Activated B cell treated with CpG ODN at 0.5 μM for 24 hours (primary cell): ENCODE measurements at regions of chr9 and their contacts with region 1.

Region 1: DNA sequence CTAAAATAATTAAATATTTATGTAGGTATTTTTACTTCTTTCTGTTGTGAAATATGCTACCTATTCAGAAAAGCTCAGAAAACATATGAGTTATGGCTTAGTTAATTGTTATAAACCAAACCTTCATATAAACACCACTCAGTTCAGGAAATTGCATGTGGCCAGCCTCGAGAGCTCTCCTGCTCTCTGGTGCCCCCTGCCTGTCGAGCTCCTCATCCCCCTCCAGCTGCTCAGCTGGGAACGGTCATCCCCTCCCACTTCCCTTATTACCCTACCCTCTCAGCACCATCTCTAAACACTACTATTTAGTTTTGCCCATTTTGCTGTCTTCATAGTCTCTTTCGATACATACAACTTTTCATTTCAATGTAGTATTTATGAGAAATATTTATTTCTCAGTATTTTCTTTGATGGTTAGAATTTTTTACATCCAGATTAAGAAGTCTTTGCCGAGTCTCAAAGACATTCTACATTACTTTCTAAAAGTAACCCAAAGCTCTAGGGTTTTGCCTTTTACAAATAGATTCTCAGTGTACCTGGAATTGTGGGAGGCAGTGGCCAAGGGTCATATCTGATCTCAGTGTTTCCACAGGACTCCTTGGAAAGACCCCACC is 51.2 kb upstream of the SEMA4D start:
- DNase-seq: peak; percentile 74
- ATAC-seq: peak; percentile 100
- H3K4me3 Mint-ChIP-seq: no peak overlapping the region
- H3K27ac Mint-ChIP-seq: peak overlapping the region; percentile 41
- H3K4me1 Mint-ChIP-seq: peaks cover 6% of the 10 kb centered on the region
- H3K27me3 Mint-ChIP-seq: no peaks in the 10 kb centered on the region
- CTCF ChIP-seq: peak; percentile 94

Region 2: DNA sequence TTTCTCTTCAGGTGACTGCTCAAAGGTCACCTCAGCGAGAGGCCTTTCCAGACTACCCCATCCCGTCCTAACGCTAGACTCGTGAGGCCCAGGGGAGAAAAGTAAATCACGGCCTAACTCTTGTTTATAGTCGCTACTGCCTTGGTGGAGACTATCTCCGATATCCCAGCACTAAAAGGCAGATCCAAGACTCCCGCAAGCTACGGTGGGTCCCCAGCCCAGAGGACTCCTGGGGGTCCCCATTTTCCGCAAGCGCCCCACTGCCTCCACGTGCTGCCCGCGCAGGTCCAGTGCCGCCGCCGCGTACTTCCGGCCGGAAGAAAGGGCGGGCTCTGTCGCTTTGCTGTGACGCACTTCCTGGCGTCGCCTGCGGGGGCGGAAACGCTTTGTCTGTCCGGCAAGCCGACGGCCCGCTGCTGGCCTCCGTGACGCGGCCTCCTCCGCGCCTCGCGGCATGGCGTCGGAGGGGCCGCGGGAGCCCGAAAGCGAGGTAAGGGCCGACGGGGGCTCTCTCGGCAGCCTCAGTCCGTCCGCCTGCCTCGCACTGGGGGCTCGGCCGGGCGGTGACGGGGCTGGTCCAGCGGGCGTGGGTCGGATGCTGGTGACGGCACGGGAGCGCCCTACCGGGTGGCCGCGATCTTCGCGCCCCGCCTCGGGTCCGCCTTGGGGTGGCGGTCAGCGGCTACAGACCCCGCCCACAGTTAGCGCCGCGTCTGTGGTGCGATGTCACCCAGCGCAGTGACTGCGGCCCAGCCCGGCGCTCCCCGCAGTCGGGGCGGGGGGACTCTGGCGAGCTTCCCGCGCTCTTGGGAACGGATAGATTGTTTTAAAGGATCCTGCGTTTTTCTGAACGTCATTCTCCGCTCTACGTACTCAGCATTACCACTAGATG is 230.8 kb before region 1 on chr9 and contains the start of gene SECISBP2:
- CTCF ChIA-PET with region 1: interaction called, 5 read pairs
- POLR2A ChIA-PET with region 1: interaction called, 19 read pairs
- intact Hi-C with region 1: loop called (anchors 1 kb)
- DNase-seq: peak; percentile 98
- ATAC-seq: peak; percentile 92
- H3K4me3 Mint-ChIP-seq: peak within 1 kb of the TSS; percentile 91
- H3K27ac Mint-ChIP-seq: peak within 1 kb of the TSS; percentile 98
- H3K4me1 Mint-ChIP-seq: peaks cover 62% of the 10 kb centered on the region
- H3K27me3 Mint-ChIP-seq: no peaks in the 10 kb centered on the region
- CTCF ChIP-seq: no peak
- total RNA-seq, gene SECISBP2: 81.5 and 97.1 TPM in 2 replicates

Region 3: DNA sequence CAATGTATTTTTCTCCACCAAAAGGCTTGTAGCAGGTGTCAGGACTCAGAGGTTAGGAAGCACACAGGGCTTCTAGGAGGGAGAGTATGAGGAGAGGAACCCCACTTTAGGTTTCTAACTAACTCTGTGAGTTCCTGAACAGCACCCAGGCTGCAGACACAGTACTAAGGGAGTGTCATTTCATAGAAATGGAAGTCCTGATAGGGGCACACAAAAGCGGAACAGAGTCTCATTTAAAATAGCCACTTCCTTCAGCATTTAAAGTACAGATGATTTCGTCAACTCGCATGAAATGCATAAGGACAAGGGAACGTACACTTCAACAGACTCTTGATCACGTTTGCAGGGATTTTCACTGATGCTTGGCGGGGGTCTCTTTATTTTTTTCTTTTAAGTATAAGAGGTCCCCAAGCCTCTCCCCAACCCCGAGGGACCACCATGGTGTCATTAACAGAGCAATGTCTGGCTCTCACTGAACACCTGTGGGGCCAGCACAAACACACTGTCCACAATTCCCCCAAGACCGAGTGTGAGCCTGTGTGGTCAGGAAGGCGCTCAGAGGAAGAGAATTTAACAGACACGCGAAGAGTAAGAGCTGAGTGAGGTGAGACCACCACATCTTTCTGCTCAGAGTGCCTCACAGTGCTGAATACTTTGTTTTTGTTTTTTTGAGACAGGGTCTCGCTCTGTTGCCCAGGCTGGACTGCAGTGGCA is 148.6 kb before region 1 on chr9:
- CTCF ChIA-PET with region 1: interaction called, 14 read pairs
- POLR2A ChIA-PET with region 1: interaction called, 6 read pairs
- intact Hi-C with region 1: loop called (anchors 1 kb)
- DNase-seq: peak; percentile 35
- ATAC-seq: peak; percentile 83
- H3K4me3 Mint-ChIP-seq: peak overlapping the region; percentile 68
- H3K27ac Mint-ChIP-seq: peak overlapping the region; percentile 90
- H3K4me1 Mint-ChIP-seq: peaks cover 62% of the 10 kb centered on the region
- H3K27me3 Mint-ChIP-seq: no peaks in the 10 kb centered on the region
- CTCF ChIP-seq: no peak

Region 4: DNA sequence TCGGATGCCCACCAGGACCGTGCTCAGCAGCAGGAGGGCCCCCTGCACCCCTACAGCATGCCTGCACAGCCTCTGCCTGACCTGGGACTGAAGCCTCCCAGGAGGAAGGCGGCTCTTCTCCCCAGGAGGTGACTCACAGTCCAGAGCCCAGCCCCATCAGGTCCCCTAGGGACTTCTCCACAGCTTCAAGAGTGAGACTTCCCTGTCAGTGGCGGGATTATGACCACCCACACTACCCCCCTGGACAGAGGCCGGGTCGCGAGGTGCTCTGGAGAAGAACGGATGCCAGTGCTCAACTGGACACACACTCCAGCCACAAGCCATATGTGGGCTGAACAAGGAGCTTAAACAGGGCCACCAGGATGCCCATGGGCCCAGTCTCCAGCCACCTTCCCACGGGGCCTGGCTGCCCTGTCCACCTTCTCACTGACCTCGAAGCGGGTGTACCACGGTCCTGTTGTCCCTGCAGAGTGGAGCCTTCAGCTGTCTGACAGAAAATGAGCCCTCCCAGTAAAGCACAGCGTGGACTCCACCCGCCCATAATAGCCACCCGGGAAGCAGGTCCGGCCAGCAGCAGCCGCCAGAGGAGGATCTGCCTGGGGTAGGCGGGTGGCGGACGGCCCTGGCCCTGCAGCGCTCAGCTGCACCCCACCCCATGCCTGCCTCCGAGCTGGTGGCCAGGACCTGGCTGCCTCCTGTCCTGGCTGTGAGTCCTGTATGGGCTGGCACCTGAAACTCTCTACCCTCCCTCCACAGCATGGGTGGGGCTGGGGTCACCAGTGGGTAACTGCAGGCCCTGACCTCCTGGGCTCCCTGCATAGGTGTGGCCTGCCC is 105.9 kb before region 1 on chr9:
- CTCF ChIA-PET with region 1: interaction called, 17 read pairs
- POLR2A ChIA-PET with region 1: interaction called, 4 read pairs
- intact Hi-C with region 1: no loop called
- DNase-seq: no peak
- ATAC-seq: peak; percentile 79
- H3K4me3 Mint-ChIP-seq: peak overlapping the region; percentile 67
- H3K27ac Mint-ChIP-seq: peak overlapping the region; percentile 65
- H3K4me1 Mint-ChIP-seq: peaks cover 79% of the 10 kb centered on the region
- H3K27me3 Mint-ChIP-seq: no peaks in the 10 kb centered on the region
- CTCF ChIP-seq: no peak

Region 5: DNA sequence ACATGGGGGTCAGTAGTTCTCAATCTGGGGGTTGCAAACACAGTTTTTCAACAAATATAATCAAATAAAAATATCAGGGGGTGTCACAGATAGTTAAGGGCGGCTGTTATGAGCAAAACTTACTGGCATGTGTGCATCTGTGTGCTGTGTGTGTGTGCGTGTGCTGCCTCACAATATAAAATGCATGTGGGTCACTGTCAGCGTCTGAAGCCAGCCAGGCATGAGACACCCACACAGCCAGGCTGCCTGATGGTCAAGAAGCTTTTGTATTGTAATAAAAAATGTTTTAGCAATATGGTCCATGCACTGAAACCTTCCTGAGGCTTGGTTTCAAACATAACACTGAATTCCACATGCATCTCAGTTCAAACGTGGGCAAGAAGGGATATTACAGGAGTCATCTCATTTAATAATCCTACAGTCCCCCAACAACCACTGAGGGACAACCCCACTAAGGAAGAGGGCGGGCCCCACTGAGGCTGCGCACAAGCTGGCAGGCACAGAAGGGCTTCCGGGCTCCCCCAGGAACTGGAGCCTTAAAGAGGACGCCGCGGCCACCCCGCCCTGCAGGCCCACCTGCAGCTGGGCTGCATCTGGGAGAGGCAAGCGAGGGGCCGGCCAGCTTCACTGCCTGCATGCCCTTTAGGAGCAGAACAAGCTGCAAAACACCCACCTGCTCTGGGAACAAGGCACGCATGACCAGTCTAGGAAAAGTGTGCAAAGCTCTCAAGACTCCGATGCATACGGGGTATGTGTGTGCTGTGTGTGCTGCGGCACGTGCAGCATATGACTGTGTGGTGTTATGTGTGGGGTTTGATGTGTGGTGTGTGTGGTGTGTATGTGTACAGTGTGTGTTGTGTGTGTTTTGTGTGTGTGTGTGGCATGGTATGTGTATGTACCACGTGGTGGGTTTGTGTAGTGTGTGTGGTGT is 65.3 kb before region 1 on chr9:
- CTCF ChIA-PET with region 1: interaction called, 4 read pairs
- POLR2A ChIA-PET with region 1: no interaction called
- intact Hi-C with region 1: loop called (anchors 2 kb)
- DNase-seq: peak; percentile 52
- ATAC-seq: peak; percentile 82
- H3K4me3 Mint-ChIP-seq: peak overlapping the region; percentile 80
- H3K27ac Mint-ChIP-seq: peak overlapping the region; percentile 79
- H3K4me1 Mint-ChIP-seq: peaks cover 79% of the 10 kb centered on the region
- H3K27me3 Mint-ChIP-seq: no peaks in the 10 kb centered on the region
- CTCF ChIP-seq: no peak

Region 6: DNA sequence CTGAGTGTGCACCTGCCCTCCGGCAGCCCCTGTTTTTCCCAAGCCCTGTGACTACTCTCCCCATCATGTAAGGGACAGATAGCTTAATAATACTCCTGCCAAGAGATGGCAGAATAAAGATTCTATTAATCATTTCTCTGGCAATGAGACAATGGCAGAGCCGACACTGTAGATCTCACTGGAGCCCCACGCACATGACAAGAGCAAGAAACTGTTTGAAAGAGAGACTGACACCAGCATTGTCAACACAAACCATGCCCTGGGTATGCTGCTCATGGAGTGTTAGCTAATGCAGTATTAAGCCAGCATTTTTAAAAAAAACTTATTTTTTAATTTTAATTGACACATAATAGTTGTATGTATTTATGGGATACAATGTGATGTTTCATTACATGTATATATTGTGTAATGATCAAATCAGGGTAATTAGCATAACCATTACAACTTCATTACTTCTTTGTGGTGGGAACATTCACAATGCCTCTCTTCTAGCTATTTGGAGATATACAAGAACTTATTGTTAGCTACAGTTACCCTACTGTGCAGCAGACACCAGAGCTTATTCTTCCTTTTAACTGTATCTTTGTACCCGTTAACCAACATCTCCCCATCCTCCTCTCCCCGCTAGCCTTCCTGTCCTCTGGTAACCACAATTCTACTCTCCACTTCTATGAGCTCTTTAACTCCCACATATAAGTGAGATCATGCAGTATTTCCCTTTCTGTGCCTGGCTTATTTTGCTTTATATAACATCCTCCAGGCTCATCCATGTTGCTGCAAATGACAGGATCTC is 19.7 kb before region 1 on chr9:
- CTCF ChIA-PET with region 1: interaction called, 12 read pairs
- POLR2A ChIA-PET with region 1: no interaction called
- intact Hi-C with region 1: no loop called
- DNase-seq: no peak
- ATAC-seq: no peak
- H3K4me3 Mint-ChIP-seq: no peak overlapping the region
- H3K27ac Mint-ChIP-seq: no peak overlapping the region
- H3K4me1 Mint-ChIP-seq: peaks cover 19% of the 10 kb centered on the region
- H3K27me3 Mint-ChIP-seq: no peaks in the 10 kb centered on the region
- CTCF ChIP-seq: no peak

Region 7: GRCh38 chr9:89993678-89994630 is 444.8 kb after region 1 on chr9:
- CTCF ChIA-PET with region 1: no interaction called
- POLR2A ChIA-PET with region 1: no interaction called
- intact Hi-C with region 1: no loop called
- DNase-seq: no peak
- ATAC-seq: no peak
- H3K4me3 Mint-ChIP-seq: no peak overlapping the region
- H3K27ac Mint-ChIP-seq: no peak overlapping the region
- H3K4me1 Mint-ChIP-seq: peaks cover 4% of the 10 kb centered on the region
- H3K27me3 Mint-ChIP-seq: no peaks in the 10 kb centered on the region
- CTCF ChIP-seq: no peak